PC-9 (cell line): ENCODE measurements at regions of chr12 and their contacts with region 1.

Region 1: GRCh38 chr12:43282106-43282505 is 269.9 kb downstream of the ADAMTS20 start:
- DNase-seq: no peak
- H3K4me3 ChIP-seq: no peak overlapping the region
- H3K27ac ChIP-seq: no peak overlapping the region
- H3K4me1 ChIP-seq: peaks cover 20% of the 10 kb centered on the region
- H3K27me3 ChIP-seq: no peaks in the 10 kb centered on the region
- CTCF ChIP-seq: peak; percentile 79

Region 2: DNA sequence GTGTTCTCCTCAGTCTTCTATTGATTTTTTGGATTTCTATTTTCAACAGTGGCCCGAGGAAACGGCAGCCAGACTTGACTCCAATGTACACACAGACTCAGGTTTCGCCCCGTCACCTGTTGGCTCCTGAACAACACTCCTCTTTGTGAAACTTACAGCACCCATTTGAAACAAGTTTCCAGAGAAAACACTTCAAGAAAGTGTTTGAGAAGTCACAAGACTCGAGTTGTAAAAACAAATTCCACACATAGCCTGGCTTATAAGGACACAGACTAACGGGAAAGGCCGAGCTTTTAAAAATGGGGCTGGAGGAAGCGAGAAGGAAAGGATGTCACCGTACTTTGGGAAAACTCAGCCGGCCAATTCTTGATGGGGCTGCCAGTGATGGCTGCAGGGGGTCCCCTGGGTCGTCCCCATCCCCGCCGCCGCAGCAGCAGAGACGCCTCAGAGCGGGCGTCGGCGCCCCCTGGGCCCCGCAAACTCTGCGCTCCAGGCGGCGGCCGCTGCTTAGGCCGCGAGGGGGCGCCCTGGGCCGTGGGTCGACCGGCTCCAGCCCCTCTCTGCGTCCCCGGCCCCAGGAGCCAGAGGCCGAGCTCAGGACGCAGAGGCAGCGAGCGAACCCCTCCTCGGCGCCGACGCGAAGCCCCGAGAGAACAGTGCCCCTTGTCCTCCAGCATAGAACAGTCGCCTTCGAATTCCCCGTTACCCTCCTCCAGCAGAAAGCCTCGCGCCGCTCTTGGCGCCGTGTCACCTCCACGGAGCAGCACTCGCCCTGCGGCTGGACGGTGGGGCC is 799.5 kb before region 1 on chr12:
- CTCF ChIA-PET with region 1: interaction called, 4 read pairs
- POLR2A ChIA-PET with region 1: no interaction called
- intact Hi-C with region 1: loop called (anchors 2 kb)
- DNase-seq: peak in 1 of 2 experiments; percentile 76
- H3K4me3 ChIP-seq: peak overlapping the region; percentile 92
- H3K27ac ChIP-seq: no peak overlapping the region
- H3K4me1 ChIP-seq: peaks cover 8% of the 10 kb centered on the region; the same call in 1 of the 2 replicates
- H3K27me3 ChIP-seq: no peaks in the 10 kb centered on the region
- CTCF ChIP-seq: peak; percentile 85

Region 3: DNA sequence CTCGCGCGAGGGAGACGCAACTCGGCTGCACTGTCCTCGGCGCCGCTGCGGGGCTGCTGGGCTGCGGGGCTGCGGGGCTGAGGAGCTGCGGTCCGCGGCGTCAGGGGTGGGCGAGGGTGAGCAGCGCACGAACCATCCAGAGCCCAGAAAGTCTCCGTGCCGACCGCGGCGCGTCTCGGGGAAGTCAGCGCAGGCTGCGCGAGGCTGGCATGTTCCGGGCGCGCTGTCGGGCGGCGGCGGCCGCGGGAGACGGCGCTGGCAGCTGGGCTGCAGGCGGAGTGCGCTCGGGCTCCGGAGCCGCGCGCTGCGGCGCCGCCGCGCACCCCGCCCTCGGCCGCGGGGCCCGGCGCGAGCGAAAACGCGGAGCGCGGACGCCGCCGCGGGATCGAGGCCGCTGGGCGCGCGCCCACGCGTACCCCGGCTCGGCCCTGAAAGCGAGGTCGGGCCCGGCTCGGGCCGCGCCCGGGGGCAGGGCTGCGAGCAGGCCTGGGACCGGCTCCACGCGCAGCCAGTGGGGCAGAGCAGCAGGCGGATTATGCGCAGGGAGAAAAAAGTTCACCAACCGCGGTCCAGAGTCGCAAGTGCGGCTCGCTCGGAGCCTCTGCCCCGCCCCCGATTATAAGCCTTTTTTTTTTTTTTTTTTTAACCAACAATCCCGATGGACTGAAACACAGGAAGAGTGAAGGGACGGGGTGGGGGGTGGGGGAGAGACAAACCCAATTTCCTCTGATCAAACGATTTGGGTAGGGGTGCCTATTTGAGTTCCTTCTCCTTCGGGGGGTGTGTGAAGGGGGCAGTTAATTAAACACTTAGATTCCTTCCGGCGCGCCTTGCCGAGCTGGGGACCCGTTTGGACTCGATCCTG is 692.4 kb before region 1 on chr12 and contains the start of gene PRICKLE1:
- CTCF ChIA-PET with region 1: no interaction called
- POLR2A ChIA-PET with region 1: no interaction called
- intact Hi-C with region 1: loop called (anchors 5 kb)
- DNase-seq: peak; percentile 36 to 56
- H3K4me3 ChIP-seq: peak within 1 kb of the TSS; percentile 89
- H3K27ac ChIP-seq: no peak within 1 kb of the TSS
- H3K4me1 ChIP-seq: peaks cover 13% of the 10 kb centered on the region; the same call in 1 of the 2 replicates
- H3K27me3 ChIP-seq: no peaks in the 10 kb centered on the region
- CTCF ChIP-seq: no peak
- total RNA-seq, gene PRICKLE1: 6.7 and 7.0 TPM in 2 replicates

Region 4: GRCh38 chr12:42756841-42757661 is 525.1 kb before region 1 on chr12:
- CTCF ChIA-PET with region 1: no interaction called
- POLR2A ChIA-PET with region 1: interaction called, 3 read pairs
- intact Hi-C with region 1: loop called (anchors 2 kb)
- DNase-seq: peak; percentile 81 to 98
- H3K4me3 ChIP-seq: peak overlapping the region; percentile 16; the same call in 1 of the 2 replicates
- H3K27ac ChIP-seq: peak overlapping the region; percentile 80
- H3K4me1 ChIP-seq: peaks cover 61% of the 10 kb centered on the region
- H3K27me3 ChIP-seq: no peaks in the 10 kb centered on the region
- CTCF ChIP-seq: no peak

Region 5: GRCh38 chr12:43087195-43088091 is 194.7 kb before region 1 on chr12:
- CTCF ChIA-PET with region 1: no interaction called
- POLR2A ChIA-PET with region 1: no interaction called
- intact Hi-C with region 1: no loop called
- DNase-seq: no peak
- H3K4me3 ChIP-seq: no peak overlapping the region
- H3K27ac ChIP-seq: no peak overlapping the region
- H3K4me1 ChIP-seq: no peaks in the 10 kb centered on the region
- H3K27me3 ChIP-seq: no peaks in the 10 kb centered on the region
- CTCF ChIP-seq: no peak

Region 6: GRCh38 chr12:43338848-43339526 is 56.9 kb after region 1 on chr12:
- CTCF ChIA-PET with region 1: no interaction called
- POLR2A ChIA-PET with region 1: no interaction called
- intact Hi-C with region 1: loop called (anchors 5 kb)
- DNase-seq: peak; percentile 9 to 52
- H3K4me3 ChIP-seq: no peak overlapping the region
- H3K27ac ChIP-seq: no peak overlapping the region
- H3K4me1 ChIP-seq: no peaks in the 10 kb centered on the region
- H3K27me3 ChIP-seq: no peaks in the 10 kb centered on the region
- CTCF ChIP-seq: peak; percentile 54; the same call in 1 of the 2 replicates